BJ (cell line): ENCODE measurements at regions of chr15 and their contacts with region 1.

Region 1: DNA sequence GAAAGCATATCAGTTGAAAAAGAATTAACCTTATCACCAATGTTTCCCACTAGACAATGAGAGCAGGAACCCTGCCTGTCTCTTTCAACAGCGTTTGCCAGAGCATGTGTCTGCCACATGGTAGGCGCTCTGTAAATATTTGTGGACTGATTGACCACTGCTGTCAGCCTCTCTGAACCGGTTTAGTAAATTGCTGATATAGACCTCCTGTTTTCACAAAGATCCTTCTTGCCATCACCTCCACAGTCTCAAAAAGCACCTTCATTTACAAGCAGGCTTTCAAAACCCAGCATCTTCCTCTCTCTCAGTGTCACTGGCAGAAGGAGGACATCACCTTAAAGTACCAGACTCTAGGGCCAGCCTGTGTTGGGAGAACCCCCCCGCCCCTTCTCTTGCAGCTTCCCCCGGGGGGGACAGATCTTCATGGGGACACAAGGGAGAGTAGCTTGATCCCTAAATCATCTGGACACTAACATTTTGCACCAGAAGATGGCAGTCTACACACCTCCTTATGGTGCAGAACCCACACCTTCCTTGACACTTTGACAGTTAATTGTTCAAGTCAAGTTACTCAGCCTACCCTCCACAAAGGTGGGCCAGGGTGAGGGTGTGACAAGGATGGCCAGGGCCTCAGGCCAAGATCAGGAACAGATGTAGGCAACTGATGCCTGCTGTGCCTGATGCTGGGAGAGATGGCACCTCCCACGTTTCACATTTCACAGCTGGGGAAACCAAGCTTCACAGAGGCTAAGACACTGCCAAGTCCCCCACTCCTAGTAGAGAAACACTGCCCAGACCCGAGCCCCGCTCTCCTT is 37.8 kb upstream of the USP3 start:
- DNase-seq: no peak
- H3K4me3 ChIP-seq: no peak overlapping the region
- H3K27me3 ChIP-seq: peaks cover 2% of the 10 kb centered on the region; the same call in 1 of the 2 replicates
- CTCF ChIP-seq: peak; percentile 67

Region 2: GRCh38 chr15:63504247-63504978 is 37.8 kb after region 1 on chr15 and contains the start of gene USP3:
- CTCF ChIA-PET with region 1: interaction called, 15 read pairs
- POLR2A ChIA-PET with region 1: no interaction called
- DNase-seq: peak; percentile 48
- H3K4me3 ChIP-seq: peak within 1 kb of the TSS; percentile 88
- H3K27me3 ChIP-seq: no peaks in the 10 kb centered on the region
- CTCF ChIP-seq: peak; percentile 26; the same call in 1 of the 2 replicates
- polyA plus RNA-seq, gene USP3: 13.3 and 17.2 TPM in 2 replicates

Region 3: DNA sequence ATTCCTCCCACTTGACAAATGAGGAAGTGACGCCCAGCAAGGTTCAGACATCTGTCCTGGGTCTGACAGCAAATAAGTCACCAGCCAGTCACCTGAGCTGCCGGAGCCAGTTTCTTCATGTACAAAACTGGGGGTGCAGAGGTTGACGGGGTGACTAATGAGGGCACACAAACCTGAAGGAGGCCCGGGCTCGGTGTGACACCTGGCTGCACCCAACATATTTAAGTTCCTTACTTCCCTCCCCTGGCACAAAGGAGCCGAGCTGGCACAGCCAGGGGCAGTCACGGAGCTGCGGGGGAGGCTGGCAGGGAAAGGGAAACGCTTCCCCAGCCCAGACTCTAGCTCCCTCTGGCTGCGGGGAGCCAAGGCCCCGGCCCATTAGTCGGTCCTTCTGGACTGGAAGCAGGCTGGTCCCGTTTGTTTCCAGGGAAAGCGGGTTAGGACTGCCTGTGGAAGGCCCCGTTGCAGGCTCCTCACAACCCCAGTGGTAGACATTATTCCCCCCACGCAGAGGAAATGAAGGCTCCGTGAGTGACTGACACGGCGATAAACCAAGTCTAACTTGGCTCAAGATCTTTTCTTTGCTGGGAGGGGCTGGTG is 132.9 kb after region 1 on chr15:
- CTCF ChIA-PET with region 1: interaction called, 23 read pairs
- POLR2A ChIA-PET with region 1: no interaction called
- DNase-seq: no peak
- H3K4me3 ChIP-seq: no peak overlapping the region
- H3K27me3 ChIP-seq: no peaks in the 10 kb centered on the region
- CTCF ChIP-seq: peak; percentile 38